ENCODE measurements at regions of chr4 and their contacts with region 1.

Region 1: DNA sequence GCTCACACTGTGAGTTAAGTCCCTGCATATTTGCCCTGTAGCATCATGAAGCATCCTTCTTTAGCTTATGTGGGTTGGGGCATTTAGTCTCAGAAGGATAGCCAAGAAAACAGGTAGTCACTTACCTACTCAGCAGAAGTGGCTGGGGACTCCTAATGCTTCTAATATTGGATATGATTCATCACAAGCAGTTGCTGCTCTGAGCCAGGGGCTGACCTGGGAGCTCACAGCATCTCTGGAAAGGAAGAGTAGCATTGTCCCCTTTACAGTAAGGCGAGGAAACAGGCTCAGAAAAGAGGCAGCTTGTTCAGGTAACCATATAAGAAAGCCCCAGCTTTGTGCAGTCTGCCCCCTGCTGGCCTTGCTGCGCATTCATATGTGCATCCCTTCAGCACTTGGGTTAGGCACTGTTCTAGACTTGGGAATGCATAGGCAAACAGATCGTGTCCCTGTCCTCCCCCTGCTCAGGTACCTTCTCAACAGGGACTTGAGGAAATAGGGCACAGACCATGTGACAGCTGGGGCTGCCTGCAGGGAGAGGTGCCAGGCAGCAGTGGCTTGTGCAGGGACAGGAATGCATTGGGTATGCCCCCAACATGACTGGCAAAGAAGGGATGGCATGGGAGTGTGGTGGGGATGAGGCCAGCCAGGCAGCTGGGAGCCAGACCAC is 35.7 kb upstream of the TBC1D14 start:
- DNase-seq: peak; percentile 72
- ATAC-seq: peak; percentile 50
- H3K4me3 ChIP-seq: no peak overlapping the region
- H3K4me3 Mint-ChIP-seq: no peak overlapping the region
- H3K27ac ChIP-seq: no peak overlapping the region
- H3K27ac Mint-ChIP-seq: peak overlapping the region; percentile 53
- H3K4me1 ChIP-seq: peaks cover 10 to 14% of the 10 kb centered on the region in 2 donors
- H3K4me1 Mint-ChIP-seq: peaks cover 12% of the 10 kb centered on the region
- H3K27me3 ChIP-seq: no peaks in the 10 kb centered on the region
- H3K27me3 Mint-ChIP-seq: no peaks in the 10 kb centered on the region
- CTCF ChIP-seq: peak; percentile 82

Region 2: GRCh38 chr4:6673660-6674499 is 200.0 kb before region 1 on chr4:
- CTCF ChIA-PET with region 1: interaction called, 14 read pairs
- POLR2A ChIA-PET with region 1: no interaction called
- intact Hi-C with region 1: loop called (anchors 1 kb)
- DNase-seq: peak; percentile 97
- ATAC-seq: peak; percentile 89
- H3K4me3 ChIP-seq: peak overlapping the region; percentile 22 to 82 (median 63)
- H3K4me3 Mint-ChIP-seq: peak overlapping the region; percentile 91
- H3K27ac ChIP-seq: peak overlapping the region; percentile 67 to 71
- H3K27ac Mint-ChIP-seq: peak overlapping the region; percentile 99
- H3K4me1 ChIP-seq: peaks cover 27 to 35% of the 10 kb centered on the region in 2 donors
- H3K4me1 Mint-ChIP-seq: peaks cover 43% of the 10 kb centered on the region
- H3K27me3 ChIP-seq: no peaks in the 10 kb centered on the region
- H3K27me3 Mint-ChIP-seq: no peaks in the 10 kb centered on the region
- CTCF ChIP-seq: no peak

Region 3: GRCh38 chr4:6777636-6778281 is 96.2 kb before region 1 on chr4:
- CTCF ChIA-PET with region 1: interaction called, 17 read pairs
- POLR2A ChIA-PET with region 1: no interaction called
- intact Hi-C with region 1: loop called (anchors 2 kb)
- DNase-seq: peak; percentile 33
- ATAC-seq: no peak
- H3K4me3 ChIP-seq: no peak overlapping the region
- H3K4me3 Mint-ChIP-seq: peak overlapping the region; percentile 55
- H3K27ac ChIP-seq: no peak overlapping the region
- H3K27ac Mint-ChIP-seq: peak overlapping the region; percentile 79
- H3K4me1 ChIP-seq: peaks cover 8 to 18% of the 10 kb centered on the region in 2 donors
- H3K4me1 Mint-ChIP-seq: peaks cover 13% of the 10 kb centered on the region
- H3K27me3 ChIP-seq: peaks cover 0 to 6% (median 0%) of the 10 kb centered on the region in 4 experiments
- H3K27me3 Mint-ChIP-seq: peaks cover 4% of the 10 kb centered on the region
- CTCF ChIP-seq: no peak

Region 4: DNA sequence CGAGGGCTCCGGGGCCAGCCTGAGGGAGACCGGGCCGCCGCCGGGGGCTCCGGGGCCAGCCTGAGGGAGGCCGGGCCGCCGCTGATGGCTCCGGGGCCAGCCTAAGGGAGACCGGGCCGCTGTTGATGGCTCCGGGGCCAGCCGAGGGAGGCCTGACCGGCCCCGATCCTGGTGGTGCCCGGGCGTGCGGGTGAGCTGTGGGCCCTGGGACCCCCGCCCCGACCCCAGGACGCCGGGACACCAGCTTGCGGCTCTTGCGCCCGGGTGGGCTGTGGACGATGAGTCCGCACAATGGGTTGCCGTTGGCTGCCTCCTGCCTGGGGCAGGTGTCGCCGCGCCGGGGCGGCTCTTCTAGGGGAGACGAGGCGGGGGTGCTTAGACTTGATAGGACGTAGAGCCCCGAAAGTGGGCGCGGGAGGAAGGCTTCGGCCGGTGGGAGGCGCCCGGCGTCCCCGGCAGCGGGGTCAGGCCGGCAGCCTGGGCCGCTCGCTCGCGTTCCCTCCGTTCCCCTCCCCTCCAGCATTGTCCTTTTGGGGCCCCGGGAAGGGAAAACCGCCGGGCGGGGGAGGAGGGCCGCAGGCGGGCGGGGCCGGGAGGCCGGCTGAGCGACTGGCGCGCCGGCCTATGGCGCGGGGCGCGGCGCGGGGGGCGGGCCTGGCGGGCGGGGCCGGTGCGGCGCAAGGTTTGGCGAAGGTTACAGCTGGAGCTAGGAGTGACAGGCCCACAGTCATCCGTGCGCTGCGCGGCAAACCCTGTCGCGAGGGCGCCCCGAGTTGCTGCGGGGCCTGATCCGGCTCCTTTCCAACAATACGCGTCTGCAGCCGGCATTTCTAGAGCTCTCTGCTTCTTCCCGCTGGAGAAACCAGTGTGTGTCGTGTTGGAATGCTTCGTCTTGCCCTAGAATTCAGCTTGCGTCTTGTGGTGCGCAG is 90.6 kb before region 1 on chr4:
- CTCF ChIA-PET with region 1: interaction called, 34 read pairs
- POLR2A ChIA-PET with region 1: no interaction called
- intact Hi-C with region 1: loop called (anchors 2 kb)
- DNase-seq: peak; percentile 92
- ATAC-seq: peak; percentile 62
- H3K4me3 ChIP-seq: peak overlapping the region; percentile 35 to 90 (median 80)
- H3K4me3 Mint-ChIP-seq: peak overlapping the region; percentile 87
- H3K27ac ChIP-seq: peak overlapping the region; percentile 88 to 97
- H3K27ac Mint-ChIP-seq: peak overlapping the region; percentile 87
- H3K4me1 ChIP-seq: peaks cover 11 to 13% of the 10 kb centered on the region in 2 donors
- H3K4me1 Mint-ChIP-seq: peaks cover 28% of the 10 kb centered on the region
- H3K27me3 ChIP-seq: no peaks in the 10 kb centered on the region
- H3K27me3 Mint-ChIP-seq: no peaks in the 10 kb centered on the region
- CTCF ChIP-seq: peak; percentile 7

Region 5: DNA sequence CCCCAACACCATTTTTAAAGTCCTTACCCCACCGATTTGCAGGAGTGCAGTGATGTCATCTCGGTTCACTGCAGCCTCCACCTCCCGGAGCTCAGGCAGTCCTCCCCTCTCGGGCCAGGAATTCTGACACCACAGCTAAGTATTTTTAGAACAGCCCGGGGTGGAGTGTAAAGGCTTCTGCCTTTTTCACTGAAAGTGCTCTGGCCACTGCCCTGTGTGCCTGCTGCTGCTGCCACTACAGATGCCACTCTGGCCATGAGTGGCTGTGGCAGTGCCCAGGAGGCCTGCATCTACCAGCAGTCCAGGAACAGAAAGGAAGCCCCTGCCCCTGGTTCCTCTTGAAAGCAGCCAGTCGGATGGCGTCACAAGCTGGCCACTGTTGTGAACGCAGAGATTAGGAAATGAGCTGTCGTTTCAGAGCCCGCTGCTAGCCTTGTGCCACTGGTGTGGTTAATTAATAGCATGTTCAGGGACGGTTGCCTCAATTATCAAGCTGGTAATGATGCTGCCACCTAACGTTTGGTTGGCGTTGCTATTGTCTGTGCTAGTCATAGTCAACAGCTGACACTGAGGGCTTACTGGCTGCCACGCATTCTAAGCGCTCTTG is 12.1 kb after region 1 on chr4:
- CTCF ChIA-PET with region 1: interaction called, 33 read pairs
- POLR2A ChIA-PET with region 1: no interaction called
- intact Hi-C with region 1: no loop called
- DNase-seq: peak; percentile 31
- ATAC-seq: peak; percentile 31
- H3K4me3 ChIP-seq: no peak overlapping the region
- H3K4me3 Mint-ChIP-seq: no peak overlapping the region
- H3K27ac ChIP-seq: no peak overlapping the region
- H3K27ac Mint-ChIP-seq: no peak overlapping the region
- H3K4me1 ChIP-seq: peaks cover 7 to 10% of the 10 kb centered on the region in 2 donors
- H3K4me1 Mint-ChIP-seq: peaks cover 2% of the 10 kb centered on the region
- H3K27me3 ChIP-seq: no peaks in the 10 kb centered on the region
- H3K27me3 Mint-ChIP-seq: no peaks in the 10 kb centered on the region
- CTCF ChIP-seq: no peak

Region 6: DNA sequence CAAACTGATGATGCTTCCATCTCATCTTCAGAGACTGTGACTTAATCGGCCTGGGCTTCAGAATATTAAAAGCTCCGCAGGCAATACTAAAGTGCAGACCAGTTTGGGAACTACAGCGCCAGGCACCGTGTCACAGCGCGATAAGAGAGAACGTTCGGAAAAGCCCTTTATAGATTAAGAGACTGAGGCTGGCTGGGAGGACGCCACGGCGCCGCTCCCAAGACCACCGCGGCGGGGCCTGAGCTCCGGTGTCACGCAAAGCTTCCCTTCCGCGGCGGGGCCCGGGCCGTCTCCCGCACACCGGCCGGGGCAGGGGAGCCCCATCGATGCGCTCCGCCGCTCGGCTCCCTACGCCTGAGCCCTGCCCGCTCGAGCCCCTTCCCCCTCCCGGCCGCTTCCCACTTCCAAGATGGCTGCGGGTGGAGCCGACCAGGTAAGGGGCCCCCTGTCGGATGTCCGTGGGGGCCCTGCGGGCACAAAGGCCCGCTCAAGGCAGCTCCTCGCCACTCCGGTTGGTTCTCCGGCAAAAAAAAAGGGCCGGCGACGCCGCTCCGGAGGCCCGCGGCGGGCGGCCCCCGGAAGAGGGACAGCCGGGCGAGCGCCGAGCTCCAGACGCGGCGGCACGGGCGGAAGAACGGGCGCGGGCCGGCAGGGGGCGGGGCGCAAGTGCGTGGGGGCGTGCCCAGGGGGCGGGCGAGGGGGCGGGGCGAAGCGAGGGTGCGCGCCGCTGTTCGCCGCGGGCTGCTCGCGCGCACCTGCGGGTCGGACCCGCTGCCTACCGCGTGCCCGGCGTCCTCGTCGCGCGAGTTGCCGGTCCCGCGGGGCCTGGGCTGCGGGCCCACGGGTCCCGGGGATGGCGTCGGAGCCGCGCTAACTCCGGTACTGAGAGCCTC is 35.4 kb after region 1 on chr4 and contains the start of gene TBC1D14:
- CTCF ChIA-PET with region 1: interaction called, 16 read pairs
- POLR2A ChIA-PET with region 1: no interaction called
- intact Hi-C with region 1: loop called (anchors 2 kb)
- DNase-seq: peak; percentile 94
- ATAC-seq: peak; percentile 89
- H3K4me3 ChIP-seq: peak within 1 kb of the TSS; percentile 72 to 85 (median 78)
- H3K4me3 Mint-ChIP-seq: peak within 1 kb of the TSS; percentile 95
- H3K27ac ChIP-seq: peak within 1 kb of the TSS; percentile 93 to 97
- H3K27ac Mint-ChIP-seq: peak within 1 kb of the TSS; percentile 94
- H3K4me1 ChIP-seq: peaks cover 33 to 43% of the 10 kb centered on the region in 2 donors
- H3K4me1 Mint-ChIP-seq: peaks cover 38% of the 10 kb centered on the region
- H3K27me3 ChIP-seq: peaks cover 0 to 3% (median 0%) of the 10 kb centered on the region in 4 experiments
- H3K27me3 Mint-ChIP-seq: peaks cover 8% of the 10 kb centered on the region
- CTCF ChIP-seq: no peak
- total RNA-seq, gene TBC1D14: 42.0 and 44.1 TPM in 2 replicates

Measured in B cell (primary cell).